B cell (primary cell): ENCODE measurements at regions of chr1 and their contacts with region 1.

Region 1: DNA sequence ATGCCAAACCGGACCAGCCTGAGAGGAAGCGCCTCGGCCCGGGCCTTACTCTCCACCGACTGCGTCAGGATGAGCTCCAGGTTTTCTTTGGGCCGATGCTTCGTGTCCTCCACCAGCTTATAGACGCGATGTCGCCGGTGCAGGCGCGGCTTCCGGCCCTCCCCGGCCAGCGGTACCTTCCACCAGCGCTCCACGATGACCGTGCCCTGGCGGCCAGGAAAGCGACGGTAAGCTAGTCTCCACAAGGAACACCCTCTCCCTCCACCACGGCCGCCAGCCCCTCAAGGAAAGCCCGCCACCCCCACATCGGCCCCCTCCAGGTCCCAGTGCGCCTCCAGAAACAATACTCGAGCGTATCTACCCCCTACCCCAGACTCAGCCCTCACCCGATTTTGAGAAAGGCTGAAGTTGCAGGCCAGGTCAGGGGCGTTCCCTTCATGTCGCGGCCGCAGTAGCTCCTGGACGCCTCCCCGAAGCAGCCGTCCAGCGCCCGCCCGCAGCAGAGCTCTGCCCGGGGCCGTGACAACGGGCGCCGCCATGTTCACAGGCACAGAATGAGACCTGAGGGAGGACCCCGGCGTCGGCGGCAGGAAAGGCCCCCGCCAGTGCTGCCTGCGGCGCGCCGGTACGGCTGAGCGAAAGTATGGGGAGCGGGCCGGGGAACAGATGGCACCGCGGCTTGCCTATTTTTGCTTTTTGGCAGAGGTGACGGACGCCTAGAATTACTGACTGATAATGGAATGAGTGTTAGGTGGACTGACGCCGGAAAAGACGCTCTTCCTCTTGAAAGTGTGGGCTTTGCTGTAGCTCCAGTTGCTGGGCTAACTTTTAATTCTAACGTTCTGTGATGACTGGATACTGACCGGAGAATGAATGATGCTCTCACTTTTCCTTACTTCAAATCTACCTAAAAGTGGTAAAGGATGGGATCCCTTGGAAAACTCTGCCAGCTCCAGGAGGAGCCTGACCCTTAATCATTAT is at the start of gene MRPL9:
- DNase-seq: peak; percentile 87
- ATAC-seq: peak; percentile 99
- H3K4me3 ChIP-seq: peak within 1 kb of the TSS; percentile 60 to 85 (median 81)
- H3K4me3 Mint-ChIP-seq: peak within 1 kb of the TSS; percentile 88
- H3K27ac ChIP-seq: peak within 1 kb of the TSS; percentile 74 to 93
- H3K27ac Mint-ChIP-seq: peak within 1 kb of the TSS; percentile 87
- H3K4me1 ChIP-seq: peaks cover 14 to 15% of the 10 kb centered on the region in 2 donors
- H3K4me1 Mint-ChIP-seq: peaks cover 21% of the 10 kb centered on the region
- H3K27me3 ChIP-seq: no peaks in the 10 kb centered on the region
- H3K27me3 Mint-ChIP-seq: no peaks in the 10 kb centered on the region
- CTCF ChIP-seq: no peak
- total RNA-seq, gene MRPL9: 84.6 and 100 TPM in 2 replicates

Region 2: GRCh38 chr1:151720974-151721787 is 42.0 kb before region 1 on chr1 and contains the start of gene RIIAD1:
- CTCF ChIA-PET with region 1: no interaction called
- POLR2A ChIA-PET with region 1: no interaction called
- intact Hi-C with region 1: loop called (anchors 2 kb)
- DNase-seq: peak; percentile 65
- ATAC-seq: peak; percentile 93
- H3K4me3 ChIP-seq: peak within 1 kb of the TSS; percentile 47 to 68 (median 58)
- H3K4me3 Mint-ChIP-seq: peak within 1 kb of the TSS; percentile 85
- H3K27ac ChIP-seq: peak within 1 kb of the TSS; percentile 38
- H3K27ac Mint-ChIP-seq: peak within 1 kb of the TSS; percentile 12
- H3K4me1 ChIP-seq: peaks cover 20 to 27% of the 10 kb centered on the region in 2 donors
- H3K4me1 Mint-ChIP-seq: peaks cover 27% of the 10 kb centered on the region
- H3K27me3 ChIP-seq: peaks cover 0 to 57% (median 32%) of the 10 kb centered on the region in 4 experiments
- H3K27me3 Mint-ChIP-seq: peaks cover 58% of the 10 kb centered on the region
- CTCF ChIP-seq: no peak
- total RNA-seq, gene RIIAD1: not detected in 2 replicates